HepG2 (cell line): ENCODE measurements at regions of chr1 and their contacts with region 1.

Region 1: GRCh38 chr1:99180343-99180808 is 83.9 kb upstream of the PLPPR4 start:
- DNase-seq: peak; percentile 73
- ATAC-seq: peak; percentile 94
- H3K4me3 ChIP-seq: no peak overlapping the region
- H3K27ac ChIP-seq: no peak overlapping the region
- H3K4me1 ChIP-seq: no peaks in the 10 kb centered on the region
- H3K27me3 ChIP-seq: no peaks in the 10 kb centered on the region
- CTCF ChIP-seq: peak; percentile 84
- EP300 ChIP-seq: no peak
- POLR2A ChIP-seq: no peak
- RAD21 ChIP-seq: peak; percentile 74

Region 2: DNA sequence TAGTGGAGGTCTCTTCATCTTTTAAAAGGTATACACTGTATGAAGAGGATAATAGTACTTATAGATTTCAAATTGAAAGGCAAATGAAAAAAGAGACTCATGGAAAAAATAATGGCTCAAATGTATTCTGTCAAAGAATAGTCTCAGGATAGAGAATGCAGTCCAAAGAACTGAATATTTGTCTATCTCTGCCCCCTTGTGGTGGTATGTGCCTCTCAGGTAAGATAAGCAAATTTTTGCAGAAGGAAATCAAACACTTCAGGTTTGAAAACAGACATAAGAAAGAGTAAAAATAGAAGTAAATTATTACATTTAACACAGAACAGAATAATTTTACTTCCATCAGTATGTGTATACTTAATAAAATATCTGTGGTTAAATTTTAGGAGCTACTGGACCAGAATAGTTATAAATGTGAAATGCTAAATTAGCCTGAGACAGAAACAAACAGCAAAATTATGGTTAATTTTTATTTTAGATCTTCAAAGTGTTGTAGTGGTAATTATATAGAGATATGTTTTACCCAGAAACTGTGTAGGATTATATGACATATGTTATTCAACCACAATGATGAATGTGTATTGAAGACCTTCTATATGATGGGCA is 301.1 kb after region 1 on chr1:
- CTCF ChIA-PET with region 1: interaction called, 16 read pairs
- POLR2A ChIA-PET with region 1: no interaction called
- in situ Hi-C with region 1: loop called (anchors 10 kb)
- intact Hi-C with region 1: loop called (anchors 1 kb)
- DNase-seq: peak; percentile 60
- ATAC-seq: peak; percentile 77
- H3K4me3 ChIP-seq: no peak overlapping the region
- H3K27ac ChIP-seq: no peak overlapping the region
- H3K4me1 ChIP-seq: no peaks in the 10 kb centered on the region
- H3K27me3 ChIP-seq: no peaks in the 10 kb centered on the region
- CTCF ChIP-seq: peak; percentile 70
- EP300 ChIP-seq: no peak
- POLR2A ChIP-seq: no peak
- RAD21 ChIP-seq: peak; percentile 53; the same call in 1 of the 2 replicates

Region 3: GRCh38 chr1:99525331-99525730 is 345.0 kb after region 1 on chr1:
- CTCF ChIA-PET with region 1: interaction called, 3 read pairs
- POLR2A ChIA-PET with region 1: no interaction called
- in situ Hi-C with region 1: no loop called
- intact Hi-C with region 1: loop called (anchors 2 kb)
- DNase-seq: no peak
- ATAC-seq: no peak
- H3K4me3 ChIP-seq: no peak overlapping the region
- H3K27ac ChIP-seq: no peak overlapping the region
- H3K4me1 ChIP-seq: 0 out of 2 replicates have a peak, but pooled peaks cover 7% of the 10 kb centered on the region
- H3K27me3 ChIP-seq: no peaks in the 10 kb centered on the region
- CTCF ChIP-seq: no peak
- EP300 ChIP-seq: no peak
- POLR2A ChIP-seq: no peak
- RAD21 ChIP-seq: no peak

Region 4: DNA sequence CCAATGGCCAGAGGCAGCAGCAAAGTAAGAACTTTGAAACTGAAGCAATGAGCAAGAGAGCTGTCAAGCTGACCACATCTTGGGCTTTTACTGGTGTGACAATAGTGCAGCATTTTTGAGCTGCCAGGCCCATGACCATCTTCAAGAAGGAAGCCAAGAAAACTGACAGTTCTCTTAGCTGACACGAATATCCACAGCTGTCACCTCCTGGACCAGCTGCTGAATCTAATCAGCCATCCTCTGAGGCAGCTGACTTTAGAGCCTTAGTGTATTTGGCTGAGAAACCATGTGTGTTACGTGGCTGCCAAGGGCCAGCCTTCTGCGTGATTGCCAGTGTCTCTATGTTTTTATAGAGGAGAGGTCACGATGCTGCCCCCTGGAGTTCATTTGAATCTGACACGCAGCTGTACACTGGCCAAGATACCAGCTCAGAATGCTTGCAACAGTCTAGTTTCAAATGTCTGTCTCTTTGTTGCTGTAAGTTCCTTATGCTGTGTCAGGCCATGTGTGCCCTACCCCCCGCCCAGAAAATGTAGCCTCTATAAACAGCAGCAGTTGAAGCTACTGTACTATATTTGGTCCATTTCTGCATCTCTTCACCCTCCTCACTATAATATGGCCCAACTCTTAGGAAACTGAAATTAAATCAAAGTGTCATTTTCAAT is 505.3 kb after region 1 on chr1:
- CTCF ChIA-PET with region 1: interaction called, 8 read pairs
- POLR2A ChIA-PET with region 1: no interaction called
- in situ Hi-C with region 1: no loop called
- intact Hi-C with region 1: loop called (anchors 1 kb)
- DNase-seq: peak; percentile 53
- ATAC-seq: peak; percentile 97
- H3K4me3 ChIP-seq: no peak overlapping the region
- H3K27ac ChIP-seq: no peak overlapping the region
- H3K4me1 ChIP-seq: no peaks in the 10 kb centered on the region
- H3K27me3 ChIP-seq: no peaks in the 10 kb centered on the region
- CTCF ChIP-seq: peak; percentile 73
- EP300 ChIP-seq: no peak
- POLR2A ChIP-seq: no peak
- RAD21 ChIP-seq: peak; percentile 61

Region 5: GRCh38 chr1:99707535-99708142 is 527.3 kb after region 1 on chr1:
- CTCF ChIA-PET with region 1: interaction called, 13 read pairs
- POLR2A ChIA-PET with region 1: no interaction called
- in situ Hi-C with region 1: loop called (anchors 10 kb)
- intact Hi-C with region 1: loop called (anchors 1 kb)
- DNase-seq: peak; percentile 55
- ATAC-seq: peak; percentile 74
- H3K4me3 ChIP-seq: no peak overlapping the region
- H3K27ac ChIP-seq: no peak overlapping the region
- H3K4me1 ChIP-seq: no peaks in the 10 kb centered on the region
- H3K27me3 ChIP-seq: no peaks in the 10 kb centered on the region
- CTCF ChIP-seq: peak; percentile 83
- EP300 ChIP-seq: no peak
- POLR2A ChIP-seq: no peak
- RAD21 ChIP-seq: peak; percentile 76

Region 6: GRCh38 chr1:99737016-99737415 is 556.6 kb after region 1 on chr1:
- CTCF ChIA-PET with region 1: interaction called, 4 read pairs
- POLR2A ChIA-PET with region 1: no interaction called
- in situ Hi-C with region 1: no loop called
- intact Hi-C with region 1: loop called (anchors 1 kb)
- DNase-seq: peak; percentile 49
- ATAC-seq: peak; percentile 97
- H3K4me3 ChIP-seq: no peak overlapping the region
- H3K27ac ChIP-seq: no peak overlapping the region
- H3K4me1 ChIP-seq: peaks cover 37% of the 10 kb centered on the region
- H3K27me3 ChIP-seq: no peaks in the 10 kb centered on the region
- CTCF ChIP-seq: peak; percentile 69
- EP300 ChIP-seq: no peak
- POLR2A ChIP-seq: no peak
- RAD21 ChIP-seq: peak; percentile 45; the same call in 1 of the 2 replicates